Ovary (tissue), 10 donors: ENCODE measurements at regions of chr15 and their contacts with region 1.

Region 1: GRCh38 chr15:69380100-69380727 is 33.9 kb upstream of the KIF23 start:
- DNase-seq: no peak
- H3K4me3 ChIP-seq: no peak overlapping the region
- H3K27ac ChIP-seq: no peak overlapping the region
- H3K4me1 ChIP-seq: no peaks in the 10 kb centered on the region
- H3K27me3 ChIP-seq: no peaks in the 10 kb centered on the region
- CTCF ChIP-seq: no peak
- EP300 ChIP-seq: no peak
- POLR2A ChIP-seq: no peak

Region 2: GRCh38 chr15:68991723-68992122 is 388.5 kb before region 1 on chr15:
- intact Hi-C with region 1: no loop called
- DNase-seq: peak in 3 of 5 donors; percentile 23 to 67 (median 62)
- H3K4me3 ChIP-seq: no peak overlapping the region
- H3K27ac ChIP-seq: no peak overlapping the region
- H3K4me1 ChIP-seq: no peaks in the 10 kb centered on the region
- H3K27me3 ChIP-seq: no peaks in the 10 kb centered on the region
- CTCF ChIP-seq: no peak
- EP300 ChIP-seq: no peak
- POLR2A ChIP-seq: no peak

Region 3: DNA sequence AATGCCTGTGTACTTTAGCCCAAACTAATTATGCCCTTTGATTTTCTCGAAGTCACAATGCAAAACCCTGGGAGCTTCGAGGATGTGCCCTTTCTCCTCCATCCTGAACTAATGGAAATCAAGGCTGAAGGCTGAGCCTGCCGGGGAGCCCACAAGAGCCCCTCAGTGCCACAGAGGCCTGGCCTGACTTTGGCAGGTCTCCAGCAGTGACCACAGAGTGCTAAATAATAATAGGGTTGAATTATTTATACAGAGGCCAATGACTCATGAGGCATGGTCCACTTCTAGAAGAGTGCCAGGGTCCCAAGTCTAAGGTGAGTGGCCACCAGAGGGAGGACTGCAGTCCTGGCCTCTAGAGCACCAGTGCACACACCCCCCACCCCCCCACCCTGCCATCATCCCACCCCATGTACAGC is 238.9 kb before region 1 on chr15:
- intact Hi-C with region 1: loop called in 1 of 4 experiments (anchors 10 kb)
- DNase-seq: no peak
- H3K4me3 ChIP-seq: no peak overlapping the region
- H3K27ac ChIP-seq: no peak overlapping the region
- H3K4me1 ChIP-seq: no peaks in the 10 kb centered on the region
- H3K27me3 ChIP-seq: no peaks in the 10 kb centered on the region
- CTCF ChIP-seq: no peak
- EP300 ChIP-seq: no peak
- POLR2A ChIP-seq: no peak

Region 4: DNA sequence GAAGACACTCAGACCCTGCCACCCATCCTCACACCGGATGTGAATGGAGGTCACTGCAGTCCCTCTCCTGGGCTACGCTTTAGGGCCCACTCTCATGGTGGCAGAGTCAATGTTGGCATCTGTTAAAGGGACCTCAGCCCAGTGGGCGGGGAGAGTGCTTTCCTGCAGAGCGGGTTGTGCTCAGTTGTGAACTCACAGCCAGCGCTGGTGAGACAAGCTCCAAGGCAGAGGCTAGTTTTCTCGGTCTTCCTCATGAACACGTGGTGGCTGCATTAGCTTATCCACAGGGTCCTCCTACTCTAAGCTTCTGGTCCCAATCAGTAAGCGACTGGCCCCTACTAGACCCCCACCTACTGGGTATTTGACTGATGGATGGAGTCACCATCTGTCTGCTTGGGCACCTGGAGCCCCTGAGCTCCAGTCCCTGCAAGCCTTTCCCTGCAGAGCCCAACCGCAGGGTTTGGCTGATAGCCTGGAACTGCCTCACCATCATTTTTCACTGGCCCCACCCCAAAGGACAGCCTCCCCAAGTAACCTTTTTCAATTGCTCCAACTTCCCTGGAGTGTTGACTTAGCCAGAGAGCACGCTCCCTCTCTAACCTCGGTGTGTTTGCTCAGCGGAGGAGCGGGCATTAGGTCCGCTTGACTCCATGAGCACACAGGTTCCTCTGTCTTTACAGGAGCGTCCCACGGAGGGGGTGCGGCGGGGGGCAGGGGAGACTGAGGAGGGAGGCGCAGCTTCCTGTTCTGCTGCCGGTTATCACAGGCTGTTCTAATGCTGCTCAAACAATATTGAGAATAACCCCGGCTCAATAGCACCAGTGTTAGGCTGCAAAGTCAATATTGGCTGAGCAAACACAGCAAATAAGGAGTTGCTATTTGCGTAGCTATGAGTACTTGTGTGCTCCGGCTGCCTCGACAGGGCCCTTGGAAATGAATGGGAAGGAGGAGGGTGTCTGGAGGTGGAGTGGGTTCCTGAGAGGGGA is 214.1 kb after region 1 on chr15:
- intact Hi-C with region 1: no loop called
- DNase-seq: peak in 3 of 5 donors; percentile 26 to 65 (median 26)
- H3K4me3 ChIP-seq: no peak overlapping the region
- H3K27ac ChIP-seq: no peak overlapping the region
- H3K4me1 ChIP-seq: peaks cover 10% of the 10 kb centered on the region
- H3K27me3 ChIP-seq: no peaks in the 10 kb centered on the region
- CTCF ChIP-seq: no peak
- EP300 ChIP-seq: no peak
- POLR2A ChIP-seq: no peak